Dorsolateral prefrontal cortex (tissue), 120 donors: ENCODE measurements at regions of chr2 and their contacts with region 1.

Region 1: DNA sequence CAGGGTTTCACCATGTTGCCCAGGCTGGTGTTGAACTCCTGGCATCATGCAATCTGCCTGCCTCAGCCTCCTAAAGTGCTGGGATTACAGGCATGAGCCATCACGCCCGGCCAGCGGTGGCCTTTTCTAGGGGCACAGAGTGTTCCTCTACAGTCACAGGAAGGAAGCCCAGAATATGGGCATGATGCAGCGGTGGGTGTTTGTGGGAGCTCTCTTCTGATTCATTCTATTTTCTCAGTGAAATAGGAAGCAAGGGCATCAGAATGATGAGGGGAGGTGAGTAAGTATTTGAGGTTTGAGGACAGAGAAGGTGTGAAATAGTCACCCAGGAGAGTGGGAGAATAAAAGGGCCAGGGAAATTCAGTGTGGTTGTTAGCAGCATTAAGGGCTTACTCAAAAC is 70.3 kb upstream of the PSME4 start:
- DNase-seq: peak in 6 of 10 donors; percentile 28 to 73 (median 54)
- H3K4me3 ChIP-seq: no peak overlapping the region
- H3K27ac ChIP-seq: peak overlapping the region in 54 of 59 donors; percentile 16 to 99 (median 96)
- H3K27me3 ChIP-seq: no peaks in the 10 kb centered on the region
- CTCF ChIP-seq: no peak

Region 2: DNA sequence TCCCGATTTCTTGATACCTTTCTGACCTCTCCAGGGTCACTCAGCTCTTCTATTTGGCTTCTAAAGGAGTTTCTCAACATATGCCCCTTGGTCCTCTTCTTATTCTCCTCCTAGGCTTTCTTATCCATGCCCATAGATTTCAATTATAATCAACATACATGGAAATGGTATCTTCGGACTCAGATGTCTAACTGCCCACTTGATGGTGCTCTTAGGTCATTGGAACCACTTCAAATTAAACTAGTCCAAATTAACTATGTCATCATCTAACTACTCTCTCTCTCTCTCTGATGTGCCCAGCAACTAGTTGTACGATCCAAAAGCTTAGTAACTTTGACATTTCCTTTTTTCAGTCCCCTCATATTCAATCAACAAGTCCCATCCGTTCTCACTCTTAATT is 138.1 kb before region 1 on chr2:
- intact Hi-C with region 1: loop called in 1 of 2 experiments (anchors 5 kb)
- DNase-seq: no peak
- H3K4me3 ChIP-seq: no peak overlapping the region
- H3K27ac ChIP-seq: peak overlapping the region in 44 of 59 donors; percentile 3 to 82 (median 52)
- H3K27me3 ChIP-seq: no peaks in the 10 kb centered on the region
- CTCF ChIP-seq: peak in 28 of 56 donors; percentile 7 to 63 (median 38)

Region 3: DNA sequence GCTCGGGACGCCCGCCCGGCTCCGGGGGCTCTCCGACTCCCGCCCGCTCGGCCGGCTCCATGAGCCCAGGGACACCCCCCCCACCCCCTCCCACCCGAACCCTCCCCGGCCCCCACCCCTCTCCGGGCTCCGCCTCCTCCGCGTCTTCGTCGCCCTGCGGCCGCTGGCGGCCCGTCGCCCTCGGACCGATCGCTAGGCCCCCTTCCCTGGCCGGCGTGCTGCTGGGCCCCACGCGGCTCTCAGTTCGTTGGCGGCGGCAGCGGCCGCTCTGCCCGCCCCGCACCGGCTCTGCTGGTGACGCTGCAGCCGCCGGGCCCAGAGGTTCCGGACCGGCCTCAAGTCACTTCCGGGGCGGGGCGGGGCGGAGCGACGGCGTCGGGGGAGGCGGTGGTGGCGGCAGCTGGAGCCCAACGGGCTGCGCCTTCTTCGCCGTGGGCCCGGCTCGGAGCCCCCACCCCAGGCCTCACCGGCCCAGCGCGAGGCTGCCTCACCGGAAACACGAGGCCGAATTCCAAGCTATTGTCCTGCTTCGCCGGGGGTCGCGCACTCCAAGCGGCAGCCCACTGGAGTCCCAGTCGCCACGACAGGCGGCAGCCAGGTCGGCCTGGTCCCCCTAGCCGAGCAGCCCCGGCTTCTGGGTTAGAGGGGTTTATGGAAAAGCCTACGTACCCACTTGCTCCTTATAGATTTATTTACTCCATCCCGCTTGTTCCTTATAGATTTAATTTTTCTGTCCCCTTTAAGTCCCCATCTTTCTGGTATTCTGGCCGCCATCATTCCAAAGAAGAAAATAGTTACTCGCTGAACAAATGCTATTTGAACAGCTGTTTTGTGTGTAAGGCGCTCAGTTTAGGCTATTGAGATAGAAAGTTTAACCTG is 70.2 kb before region 1 on chr2 and contains the start of gene PSME4:
- intact Hi-C with region 1: loop called (anchors 5 kb)
- DNase-seq: peak; percentile 86 to 96 (median 93)
- H3K4me3 ChIP-seq: peak within 1 kb of the TSS; percentile 58 to 100 (median 94)
- H3K27ac ChIP-seq: peak within 1 kb of the TSS; percentile 69 to 97 (median 92)
- H3K27me3 ChIP-seq: no peaks in the 10 kb centered on the region
- CTCF ChIP-seq: peak in 13 of 56 donors; percentile 9 to 37 (median 19)
- total RNA-seq, gene PSME4: 25.8 to 76.6 (median 43.2) TPM